AG04449 (cell line): ENCODE measurements at regions of chrX and their contacts with region 1.

Region 1: DNA sequence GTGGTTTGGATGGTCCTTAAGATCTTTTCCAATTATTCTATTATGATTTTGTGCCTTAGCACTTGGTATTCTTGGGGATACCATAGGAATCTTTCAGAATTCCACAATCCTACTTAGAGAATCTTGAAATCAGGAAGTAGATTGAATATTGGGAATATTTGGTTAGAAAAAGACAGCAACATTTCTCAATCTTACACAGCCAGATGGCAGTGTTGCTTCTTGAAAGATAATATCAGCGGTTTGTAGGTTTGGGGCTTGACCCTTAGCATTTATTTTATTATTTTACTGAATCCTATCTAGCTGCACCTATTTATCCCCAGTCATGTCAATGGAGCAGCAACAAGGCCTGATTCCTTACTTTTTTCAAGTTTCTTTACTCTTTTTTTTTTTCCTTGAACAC is 28.6 kb downstream of the MAGEB1 start:
- DNase-seq: no peak
- H3K4me3 ChIP-seq: no peak overlapping the region
- CTCF ChIP-seq: no peak

Region 2: DNA sequence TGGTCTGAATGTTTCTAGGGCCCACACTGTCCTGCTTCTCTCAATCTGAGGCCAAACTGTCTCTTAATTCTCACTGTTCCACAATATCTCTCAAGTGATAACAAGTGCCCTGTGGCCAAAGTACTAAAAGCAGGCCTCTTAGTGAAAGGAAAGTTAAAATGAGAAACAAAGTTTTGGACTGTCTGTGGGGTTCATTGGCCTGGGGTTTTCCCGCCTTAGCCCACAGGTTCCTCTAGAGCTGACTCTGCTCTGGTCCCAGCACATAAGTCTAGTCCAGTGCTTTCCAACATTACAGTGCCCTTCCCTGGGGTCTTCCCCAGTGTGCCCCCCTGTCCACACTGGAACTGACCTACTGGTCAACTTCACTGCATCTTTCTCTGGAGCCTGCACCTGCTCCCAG is 22.2 kb before region 1 on chrX:
- CTCF ChIA-PET with region 1: no interaction called
- POLR2A ChIA-PET with region 1: no interaction called
- DNase-seq: no peak
- H3K4me3 ChIP-seq: no peak overlapping the region
- CTCF ChIP-seq: no peak

Region 3: DNA sequence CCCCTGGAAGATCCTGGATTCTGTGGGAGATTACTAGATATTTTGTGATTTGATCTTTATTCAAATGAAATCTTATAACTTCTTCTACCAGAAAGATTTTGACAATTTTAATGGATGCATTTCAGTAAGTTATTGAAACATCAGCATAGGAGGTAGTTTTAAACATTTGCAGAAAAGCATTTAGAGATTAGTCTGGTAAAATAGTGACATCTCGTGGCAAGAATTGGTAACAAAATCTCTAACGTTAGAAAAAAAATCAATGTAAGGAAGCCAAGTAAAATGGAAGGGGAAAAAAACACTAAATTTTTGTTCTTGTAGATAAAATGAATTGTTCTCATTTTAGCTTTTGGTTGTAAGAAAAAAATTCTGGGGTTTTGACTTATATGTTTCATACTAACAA is 228.8 kb after region 1 on chrX:
- CTCF ChIA-PET with region 1: interaction called, 14 read pairs
- POLR2A ChIA-PET with region 1: no interaction called
- DNase-seq: no peak
- H3K4me3 ChIP-seq: no peak overlapping the region
- CTCF ChIP-seq: no peak